Transverse colon (tissue), 4 donors: ENCODE measurements at regions of chr1 and their contacts with region 1.

Region 1: GRCh38 chr1:230867903-230868735 is at the start of gene C1orf198:
- DNase-seq: peak; percentile 81
- H3K4me3 ChIP-seq: peak within 1 kb of the TSS; percentile 68 to 89 (median 79)
- H3K27ac ChIP-seq: peak within 1 kb of the TSS; percentile 81 to 90 (median 86)
- H3K4me1 ChIP-seq: peaks cover 5 to 43% (median 30%) of the 10 kb centered on the region in 4 donors
- H3K27me3 ChIP-seq: no peaks in the 10 kb centered on the region
- CTCF ChIP-seq: no peak
- EP300 ChIP-seq: no peak
- POLR2A ChIP-seq: peak; percentile 34
- total RNA-seq, gene C1orf198: 10.8 to 26.7 (median 18.2) TPM

Region 2: DNA sequence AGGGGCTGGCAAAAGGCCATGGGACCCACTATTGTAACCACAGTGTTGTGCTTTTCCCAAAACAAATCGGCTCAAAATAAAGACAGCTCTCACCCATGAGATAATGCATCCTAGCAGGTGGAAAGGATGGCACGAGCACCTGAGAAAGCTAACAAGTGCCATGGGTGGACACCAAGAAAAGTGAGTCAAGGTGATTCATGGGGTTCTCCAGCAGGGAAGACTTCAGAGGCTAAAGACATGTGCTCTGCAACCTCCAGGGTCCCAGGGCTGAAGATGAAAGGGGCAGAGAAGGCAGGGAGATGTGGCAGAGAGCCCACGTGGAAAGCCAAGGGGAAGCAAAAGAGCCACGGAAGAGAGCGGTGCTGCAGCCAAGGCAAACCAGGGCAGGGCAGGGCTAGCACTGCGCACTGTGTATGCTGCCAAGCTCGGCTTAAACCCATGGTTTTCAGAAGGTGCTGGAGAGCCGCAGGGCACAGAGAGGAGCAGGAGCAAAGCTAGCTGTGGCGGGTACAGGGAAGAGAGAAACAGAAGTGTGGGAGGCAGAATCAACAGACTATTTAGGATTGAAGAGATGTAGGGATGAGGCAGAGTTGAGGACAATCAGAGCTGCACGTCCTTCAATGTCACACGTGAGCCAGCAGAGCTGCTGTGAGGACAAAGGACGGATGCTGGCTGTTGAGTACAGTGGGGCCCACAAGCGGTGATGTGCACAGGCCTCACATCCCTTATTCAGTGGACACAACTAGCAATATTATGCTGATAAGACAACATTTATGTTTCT is 42.0 kb after region 1 on chr1:
- in situ Hi-C with region 1: no loop called
- intact Hi-C with region 1: loop called (anchors 5 kb)
- DNase-seq: no peak
- H3K4me3 ChIP-seq: no peak overlapping the region
- H3K27ac ChIP-seq: peak overlapping the region in 3 of 4 donors; percentile 20 to 28 (median 28)
- H3K4me1 ChIP-seq: peaks cover 0 to 5% (median 0%) of the 10 kb centered on the region in 4 donors
- H3K27me3 ChIP-seq: no peaks in the 10 kb centered on the region
- CTCF ChIP-seq: no peak
- EP300 ChIP-seq: no peak
- POLR2A ChIP-seq: no peak

Region 3: DNA sequence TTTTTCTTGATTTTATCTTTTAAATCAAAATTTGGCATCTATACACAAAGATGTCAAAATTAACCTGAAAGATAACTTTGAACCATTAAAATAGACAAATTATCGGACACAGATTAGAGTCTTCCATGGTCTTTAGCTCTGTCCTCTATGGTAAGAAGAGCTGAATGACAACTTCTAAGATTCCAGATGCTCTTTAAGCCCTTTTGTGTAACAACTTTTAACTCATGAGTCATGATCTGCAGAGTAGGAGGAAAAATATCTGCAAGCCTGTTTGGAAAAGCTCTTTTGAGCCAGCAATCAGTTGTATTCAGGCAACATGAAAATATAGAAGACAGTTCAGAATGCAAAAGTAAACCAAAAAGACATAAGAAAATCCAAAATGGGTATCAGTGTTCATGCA is 72.7 kb after region 1 on chr1:
- in situ Hi-C with region 1: no loop called
- intact Hi-C with region 1: no loop called
- DNase-seq: no peak
- H3K4me3 ChIP-seq: no peak overlapping the region
- H3K27ac ChIP-seq: no peak overlapping the region
- H3K4me1 ChIP-seq: peaks cover 0 to 29% (median 6%) of the 10 kb centered on the region in 4 donors
- H3K27me3 ChIP-seq: no peaks in the 10 kb centered on the region
- CTCF ChIP-seq: no peak
- EP300 ChIP-seq: no peak
- POLR2A ChIP-seq: no peak